Natural killer cell (primary cell): ENCODE measurements at regions of chr9 and their contacts with region 1.

Region 1: GRCh38 chr9:136840140-136840687 is 2.1 kb upstream of the AJM1 start:
- DNase-seq: no peak
- ATAC-seq: no peak
- H3K4me3 ChIP-seq: no peak overlapping the region
- H3K4me3 Mint-ChIP-seq: peak overlapping the region; percentile 51
- H3K27ac ChIP-seq: no peak overlapping the region
- H3K27ac Mint-ChIP-seq: peak overlapping the region in 1 of 2 donors; percentile 2
- H3K4me1 ChIP-seq: peaks cover 30% of the 10 kb centered on the region
- H3K4me1 Mint-ChIP-seq: peaks cover 11 to 20% of the 10 kb centered on the region in 2 donors
- H3K27me3 ChIP-seq: peaks cover 2% of the 10 kb centered on the region
- H3K27me3 Mint-ChIP-seq: no peaks in the 10 kb centered on the region
- CTCF ChIP-seq: no peak

Region 2: DNA sequence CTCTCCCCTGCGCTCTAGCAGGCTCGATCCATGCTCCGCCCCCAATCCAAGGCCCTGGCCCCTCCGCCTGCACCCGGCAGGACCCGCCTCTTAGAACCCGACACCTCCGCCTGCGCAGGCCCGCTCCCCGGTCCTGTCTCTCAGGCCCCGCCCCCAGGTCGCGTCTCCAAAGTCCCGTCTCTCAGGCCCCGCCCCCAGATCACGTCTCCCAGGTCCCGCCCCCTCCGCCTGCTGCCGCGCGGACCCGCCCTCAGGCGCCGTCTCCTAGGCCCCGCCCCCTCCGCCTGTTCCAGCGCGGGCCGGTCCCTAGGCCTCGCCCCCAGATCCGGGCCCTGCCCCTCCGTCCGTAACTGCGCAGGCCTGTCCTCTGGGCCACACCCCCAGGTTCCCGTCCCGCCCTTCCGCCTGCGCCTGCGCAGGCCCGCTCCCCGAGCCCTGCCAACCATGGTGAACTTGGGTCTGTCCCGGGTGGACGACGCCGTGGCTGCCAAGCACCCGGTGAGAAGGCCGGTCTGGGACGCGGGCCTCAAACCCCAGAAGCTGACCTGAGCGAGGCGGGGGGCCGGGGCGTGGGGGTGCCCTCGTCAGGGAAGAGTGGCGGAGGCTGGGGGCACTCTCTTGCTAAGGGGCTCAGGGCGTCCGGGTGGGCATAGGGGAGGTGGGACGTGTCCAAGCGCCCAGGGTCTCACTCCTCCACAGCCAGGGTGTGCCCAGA is 49.1 kb before region 1 on chr9 and contains the start of gene TMEM141:
- intact Hi-C with region 1: loop called (anchors 5 kb)
- DNase-seq: peak; percentile 99 to 100
- ATAC-seq: peak; percentile 84 to 96 (median 86)
- H3K4me3 ChIP-seq: peak within 1 kb of the TSS; percentile 66
- H3K4me3 Mint-ChIP-seq: peak within 1 kb of the TSS; percentile 80
- H3K27ac ChIP-seq: peak within 1 kb of the TSS; percentile 88
- H3K27ac Mint-ChIP-seq: peak within 1 kb of the TSS; percentile 89 to 91
- H3K4me1 ChIP-seq: peaks cover 43% of the 10 kb centered on the region
- H3K4me1 Mint-ChIP-seq: peaks cover 28 to 34% of the 10 kb centered on the region in 2 donors
- H3K27me3 ChIP-seq: no peaks in the 10 kb centered on the region
- H3K27me3 Mint-ChIP-seq: peaks cover 0 to 4% of the 10 kb centered on the region in 2 donors
- CTCF ChIP-seq: no peak
- total RNA-seq, gene TMEM141: 22.4 to 26.9 (median 26.6) TPM

Region 3: DNA sequence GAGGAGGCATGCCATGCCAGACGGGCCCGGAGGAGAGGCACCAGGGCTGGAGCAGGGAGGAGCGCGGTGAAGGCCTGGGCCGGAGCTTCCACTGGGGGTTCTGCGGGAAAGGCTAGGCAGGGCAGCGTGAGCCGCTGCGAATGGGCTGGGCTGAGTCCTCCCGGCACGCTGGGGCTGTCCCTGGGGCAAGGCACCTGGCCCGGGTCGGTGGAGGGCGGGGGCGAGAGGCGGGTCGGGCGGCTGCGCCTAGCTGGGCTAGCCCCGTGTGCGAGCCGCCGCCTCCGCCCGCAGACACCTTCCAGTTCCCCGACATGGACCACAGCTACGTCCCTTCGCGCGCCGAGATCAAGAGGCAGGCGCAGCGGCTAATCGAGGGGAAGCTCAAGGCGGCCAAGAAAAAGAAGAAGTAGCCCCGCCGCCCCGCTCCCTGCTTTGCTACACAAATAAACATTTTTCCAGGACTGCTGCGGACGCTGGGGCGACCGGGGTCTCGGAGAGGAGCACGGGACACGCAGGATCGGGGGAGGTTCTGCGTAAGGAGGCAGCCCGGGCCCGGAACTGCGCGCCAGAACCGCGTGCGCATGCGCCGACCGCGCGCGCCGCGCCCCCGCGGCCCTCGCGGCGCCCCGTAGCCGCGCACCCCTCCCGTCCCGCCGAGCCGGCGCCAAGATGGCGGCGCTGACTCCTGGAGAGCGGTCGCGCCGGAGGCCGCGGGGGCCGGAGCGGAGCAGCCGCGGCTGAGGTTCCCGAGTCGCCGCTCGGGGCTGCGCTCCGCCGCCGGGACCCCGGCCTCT is 32.7 kb before region 1 on chr9 and contains the start of gene RABL6:
- intact Hi-C with region 1: loop called (anchors 5 kb)
- DNase-seq: peak; percentile 83 to 94
- ATAC-seq: peak; percentile 89 to 94 (median 90)
- H3K4me3 ChIP-seq: peak within 1 kb of the TSS; percentile 84
- H3K4me3 Mint-ChIP-seq: peak within 1 kb of the TSS; percentile 91
- H3K27ac ChIP-seq: peak within 1 kb of the TSS; percentile 93
- H3K27ac Mint-ChIP-seq: peak within 1 kb of the TSS; percentile 84 to 92
- H3K4me1 ChIP-seq: peaks cover 31% of the 10 kb centered on the region
- H3K4me1 Mint-ChIP-seq: peaks cover 23 to 35% of the 10 kb centered on the region in 2 donors
- H3K27me3 ChIP-seq: no peaks in the 10 kb centered on the region
- H3K27me3 Mint-ChIP-seq: no peaks in the 10 kb centered on the region
- CTCF ChIP-seq: no peak
- total RNA-seq, gene RABL6: 72.7 to 82.5 (median 75.9) TPM